Activated T-helper 1 cell treated with anti-CD3 and anti-CD28 coated beads, Interleukin-12 subunit alpha, Interleukin-12 subunit beta, Interleukin-2, Interleukin-4 antibody, amounts not matched to agents 30 ng/mL and 10 ng/mL and 1 ng/mL, durations not matched to agents 14 hours and 24 hours and 36 hours (primary cell): ENCODE measurements at regions of chr6 and their contacts with region 1.

Region 1: DNA sequence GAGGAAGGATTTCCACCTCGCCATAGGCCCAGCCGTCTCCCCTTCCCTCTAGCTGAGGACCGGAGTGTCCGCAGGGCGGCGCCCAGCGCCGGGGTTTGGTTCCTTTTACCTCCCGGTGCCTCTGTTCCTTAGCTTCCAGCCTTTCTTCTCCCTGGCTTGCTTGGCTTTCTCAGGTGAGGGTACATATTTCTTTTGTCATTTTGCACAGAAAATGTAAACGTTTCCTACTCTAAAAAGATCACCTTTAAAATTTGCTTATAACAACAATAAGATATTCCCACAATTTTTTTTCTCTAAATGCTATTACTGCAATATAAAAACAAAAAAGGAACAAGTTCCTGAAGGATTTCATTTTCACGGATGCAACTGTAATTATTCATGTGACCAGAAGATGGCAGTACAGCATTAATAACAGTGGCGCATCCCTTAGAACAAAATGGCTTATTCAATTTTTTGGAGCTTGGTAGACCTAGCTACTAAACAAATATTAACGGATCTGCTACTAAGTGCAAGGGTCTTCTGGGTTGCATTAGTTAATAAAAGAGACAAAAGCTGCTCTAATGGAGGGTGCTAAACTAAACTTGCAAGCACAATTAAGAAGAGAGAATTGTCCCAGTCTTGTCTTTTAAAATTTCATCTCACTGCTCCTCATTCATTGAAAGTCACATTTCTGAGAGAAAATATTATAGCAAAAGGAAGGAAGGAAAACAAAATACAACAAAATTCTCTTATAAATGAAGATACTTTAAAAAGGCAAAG is 172.9 kb downstream of the ADGRG6 start:
- DNase-seq: no peak
- H3K4me3 Mint-ChIP-seq: no peak overlapping the region
- H3K27ac Mint-ChIP-seq: no peak overlapping the region
- H3K4me1 Mint-ChIP-seq: peaks cover 7% of the 10 kb centered on the region
- H3K27me3 Mint-ChIP-seq: peaks cover 7% of the 10 kb centered on the region

Region 2: DNA sequence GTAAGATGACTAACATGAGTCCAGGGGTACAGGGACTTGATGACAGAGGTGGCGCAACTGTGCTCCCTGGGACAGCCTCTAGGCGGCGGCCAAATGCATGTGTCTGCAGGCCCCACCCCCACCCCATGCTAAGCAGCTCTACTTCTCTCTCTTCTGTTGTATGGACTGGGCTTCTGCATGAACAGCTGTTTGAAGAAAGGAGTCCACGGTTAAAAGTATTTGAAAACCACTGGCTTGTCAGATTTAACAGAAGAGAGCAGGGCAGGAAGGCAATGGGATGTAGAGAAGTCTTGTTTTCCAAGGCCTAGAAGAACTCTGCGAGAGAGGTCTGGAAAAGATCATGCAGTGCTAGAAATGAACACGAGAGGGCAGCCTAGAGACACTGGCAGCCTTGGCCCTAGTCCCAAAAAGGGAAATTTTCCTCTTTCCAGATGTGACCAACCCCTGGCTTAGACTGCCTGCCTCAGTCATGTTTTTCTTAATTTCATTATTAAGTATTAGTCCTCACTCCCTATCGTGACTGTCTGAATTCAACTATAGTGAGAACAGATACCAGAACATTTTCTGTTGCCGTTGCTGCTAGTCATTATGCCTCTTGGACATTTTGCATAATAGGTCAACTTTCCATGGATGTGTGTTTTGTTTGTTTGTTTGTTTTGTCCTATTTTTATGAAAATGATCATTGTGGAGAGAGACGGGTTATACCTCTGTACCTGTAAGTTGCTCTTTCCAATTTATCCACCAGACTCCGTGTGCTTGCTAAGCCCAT is 92.1 kb after region 1 on chr6:
- intact Hi-C with region 1: loop called (anchors 2 kb)
- DNase-seq: peak; percentile 38
- H3K4me3 Mint-ChIP-seq: no peak overlapping the region
- H3K27ac Mint-ChIP-seq: no peak overlapping the region
- H3K4me1 Mint-ChIP-seq: peaks cover 48% of the 10 kb centered on the region
- H3K27me3 Mint-ChIP-seq: no peaks in the 10 kb centered on the region

Region 3: GRCh38 chr6:143026696-143027449 is 552.2 kb after region 1 on chr6:
- intact Hi-C with region 1: loop called (anchors 2 kb)
- DNase-seq: peak; percentile 9
- H3K4me3 Mint-ChIP-seq: no peak overlapping the region
- H3K27ac Mint-ChIP-seq: no peak overlapping the region
- H3K4me1 Mint-ChIP-seq: peaks cover 11% of the 10 kb centered on the region
- H3K27me3 Mint-ChIP-seq: no peaks in the 10 kb centered on the region

Region 4: DNA sequence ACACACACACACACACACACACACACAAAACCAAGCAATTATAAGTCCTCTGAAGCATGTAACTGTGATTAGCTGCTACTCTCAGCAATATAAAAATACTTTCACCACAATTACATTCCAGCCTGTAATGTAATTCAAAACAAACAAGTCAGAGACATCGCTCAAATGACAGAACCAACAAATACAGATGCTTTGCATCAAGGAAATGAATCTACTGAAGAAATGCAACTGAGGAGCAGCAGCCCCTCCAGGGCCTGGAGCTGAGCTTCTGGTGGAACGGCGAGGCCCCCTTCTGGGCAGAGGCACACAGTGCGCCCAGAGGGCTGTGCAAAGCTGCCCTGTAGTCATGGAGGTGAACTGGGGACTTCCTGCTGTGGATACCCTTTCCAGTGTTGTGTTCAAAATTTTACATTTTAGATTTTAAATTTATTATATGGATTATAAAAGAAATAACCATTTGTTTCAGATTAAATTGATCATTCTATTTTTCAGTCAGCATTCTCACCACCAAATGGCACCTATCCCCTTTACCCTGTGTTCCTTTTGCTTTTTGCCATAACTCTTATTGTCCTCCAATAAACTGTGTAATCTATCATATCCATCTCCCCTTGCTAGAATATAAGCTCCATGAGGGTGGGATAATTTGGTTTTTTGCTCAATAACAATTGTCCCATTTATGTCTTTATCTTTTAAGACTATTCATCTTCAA is 952.6 kb after region 1 on chr6:
- intact Hi-C with region 1: loop called (anchors 1 kb)
- DNase-seq: peak; percentile 55
- H3K4me3 Mint-ChIP-seq: no peak overlapping the region
- H3K27ac Mint-ChIP-seq: no peak overlapping the region
- H3K4me1 Mint-ChIP-seq: no peaks in the 10 kb centered on the region
- H3K27me3 Mint-ChIP-seq: no peaks in the 10 kb centered on the region

Region 5: GRCh38 chr6:143575440-143575839 is 1100.7 kb after region 1 on chr6:
- intact Hi-C with region 1: loop called (anchors 10 kb)
- DNase-seq: peak; percentile 48
- H3K4me3 Mint-ChIP-seq: no peak overlapping the region
- H3K27ac Mint-ChIP-seq: no peak overlapping the region
- H3K4me1 Mint-ChIP-seq: peaks cover 12% of the 10 kb centered on the region
- H3K27me3 Mint-ChIP-seq: no peaks in the 10 kb centered on the region